ENCODE measurements at regions of chr7 and their contacts with region 1.

Region 1: GRCh38 chr7:148242294-148242801 is 348.2 kb upstream of the C7orf33 start:
- DNase-seq: peak in 1 of 5 donors; percentile 42
- H3K4me3 ChIP-seq: no peak overlapping the region
- H3K27ac ChIP-seq: no peak overlapping the region
- H3K4me1 ChIP-seq: peaks cover 5% of the 10 kb centered on the region
- H3K27me3 ChIP-seq: no peaks in the 10 kb centered on the region
- CTCF ChIP-seq: peak; percentile 61 to 66 (median 66)
- EP300 ChIP-seq: no peak
- POLR2A ChIP-seq: no peak

Region 2: DNA sequence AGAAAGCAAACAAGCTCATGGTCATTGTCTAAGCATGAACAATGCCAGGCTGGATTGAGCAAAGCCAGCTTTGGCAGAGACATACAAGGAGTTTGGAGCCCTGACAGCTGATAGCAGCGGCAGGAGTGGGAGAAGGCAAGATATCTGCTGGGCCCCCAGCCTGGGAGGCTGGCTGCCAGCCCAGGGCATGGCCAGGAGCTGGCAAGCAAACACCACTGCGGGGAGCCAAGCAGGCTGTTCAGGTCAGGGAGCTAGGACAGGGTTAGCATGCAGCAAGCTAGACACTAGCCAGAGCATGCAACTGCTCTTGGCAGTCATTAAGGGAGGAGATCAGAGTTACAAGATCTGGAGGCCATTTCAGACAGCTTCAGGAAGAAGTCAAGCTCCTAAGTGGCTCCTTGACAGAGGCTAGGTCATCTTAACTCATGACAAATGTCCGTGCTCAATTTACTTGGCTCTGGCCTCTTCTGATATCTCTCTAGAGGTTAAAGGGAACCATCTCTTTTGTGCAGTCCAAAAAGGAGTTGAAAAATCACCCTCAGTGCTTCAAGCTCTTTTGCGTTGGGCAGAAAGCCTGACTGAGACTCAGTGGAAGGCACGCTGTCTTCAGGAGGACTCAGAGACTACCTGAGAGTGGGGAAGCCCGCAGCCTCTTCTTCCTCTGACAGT is 88.6 kb before region 1 on chr7:
- intact Hi-C with region 1: loop called in 1 of 4 experiments (anchors 10 kb)
- DNase-seq: peak; percentile 60 to 93 (median 84)
- H3K4me3 ChIP-seq: no peak overlapping the region
- H3K27ac ChIP-seq: peak overlapping the region in 1 of 2 donors; percentile 59
- H3K4me1 ChIP-seq: peaks cover 5% of the 10 kb centered on the region
- H3K27me3 ChIP-seq: no peaks in the 10 kb centered on the region
- CTCF ChIP-seq: no peak
- EP300 ChIP-seq: no peak
- POLR2A ChIP-seq: no peak

Region 3: GRCh38 chr7:148222716-148223115 is 19.6 kb before region 1 on chr7:
- intact Hi-C with region 1: no loop called
- DNase-seq: no peak
- H3K4me3 ChIP-seq: no peak overlapping the region
- H3K27ac ChIP-seq: no peak overlapping the region
- H3K4me1 ChIP-seq: no peaks in the 10 kb centered on the region
- H3K27me3 ChIP-seq: no peaks in the 10 kb centered on the region
- CTCF ChIP-seq: no peak
- EP300 ChIP-seq: no peak
- POLR2A ChIP-seq: no peak

Measured in ovary (tissue), 10 donors.